Activated CD4-positive, alpha-beta T cell treated with anti-CD3 and anti-CD28 coated beads, Interleukin-2, amount 10 ng/mL, durations not matched to agents 24 days and 14 days (primary cell): ENCODE measurements at regions of chr9 and their contacts with region 1.

Region 1: GRCh38 chr9:18255158-18255629 is 218.8 kb upstream of the ADAMTSL1 start:
- DNase-seq: peak; percentile 90
- H3K4me3 Mint-ChIP-seq: no peak overlapping the region
- H3K27ac Mint-ChIP-seq: no peak overlapping the region
- H3K4me1 Mint-ChIP-seq: no peaks in the 10 kb centered on the region
- H3K27me3 Mint-ChIP-seq: peaks cover 7% of the 10 kb centered on the region

Region 2: DNA sequence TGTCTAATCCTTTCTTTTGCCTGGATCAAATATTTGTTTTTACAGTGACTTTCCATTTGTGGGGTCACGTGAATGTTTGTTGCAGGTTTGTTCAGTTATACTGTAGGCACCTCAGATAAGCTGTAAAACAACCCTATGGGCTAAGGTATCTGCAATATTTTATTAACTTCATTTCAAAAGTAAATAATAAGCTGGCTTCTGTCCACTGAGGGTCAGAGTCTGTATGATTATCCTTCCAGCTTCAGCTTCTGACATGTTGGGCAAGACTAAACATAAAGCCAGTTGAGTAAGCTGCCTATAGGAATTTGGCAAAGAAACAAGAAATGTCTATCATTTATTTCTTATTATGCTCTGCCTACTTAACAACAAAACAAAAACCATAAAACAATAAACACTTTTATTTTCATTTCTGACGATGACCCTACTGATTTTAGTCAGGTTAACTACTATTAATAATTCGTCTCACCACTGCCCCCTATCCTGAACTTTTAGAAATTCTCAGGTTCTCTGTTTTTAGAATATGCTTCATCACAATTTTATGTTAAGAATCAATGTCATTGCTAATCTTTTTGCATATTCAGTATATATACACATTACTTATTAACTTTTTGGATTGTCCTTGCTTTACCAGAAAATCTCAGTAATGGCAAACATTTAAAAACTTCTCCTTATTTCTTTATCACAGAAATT is 194.8 kb before region 1 on chr9:
- intact Hi-C with region 1: no loop called
- DNase-seq: no peak
- H3K4me3 Mint-ChIP-seq: no peak overlapping the region
- H3K27ac Mint-ChIP-seq: no peak overlapping the region
- H3K4me1 Mint-ChIP-seq: peaks cover 1% of the 10 kb centered on the region
- H3K27me3 Mint-ChIP-seq: no peaks in the 10 kb centered on the region

Region 3: GRCh38 chr9:18442629-18443491 is 187.7 kb after region 1 on chr9:
- intact Hi-C with region 1: loop called (anchors 2 kb)
- DNase-seq: peak; percentile 82
- H3K4me3 Mint-ChIP-seq: no peak overlapping the region
- H3K27ac Mint-ChIP-seq: no peak overlapping the region
- H3K4me1 Mint-ChIP-seq: no peaks in the 10 kb centered on the region
- H3K27me3 Mint-ChIP-seq: peaks cover 16% of the 10 kb centered on the region